SK-N-SH (cell line): ENCODE measurements at regions of chr9 and their contacts with region 1.

Region 1: GRCh38 chr9:130220352-130220751 is 45.2 kb upstream of the HMCN2 start:
- DNase-seq: peak; percentile 89
- H3K4me3 ChIP-seq: no peak overlapping the region
- H3K27ac ChIP-seq: peak overlapping the region in 1 of 2 experiments; percentile 90; a peak in 2 of 4 replicates
- H3K4me1 ChIP-seq: peaks cover 0 to 22% of the 10 kb centered on the region in 2 experiments; a peak in 1 of 4 replicates
- H3K27me3 ChIP-seq: no peaks in the 10 kb centered on the region
- CTCF ChIP-seq: no peak
- EP300 ChIP-seq: no peak
- RAD21 ChIP-seq: peak; percentile 38

Region 2: DNA sequence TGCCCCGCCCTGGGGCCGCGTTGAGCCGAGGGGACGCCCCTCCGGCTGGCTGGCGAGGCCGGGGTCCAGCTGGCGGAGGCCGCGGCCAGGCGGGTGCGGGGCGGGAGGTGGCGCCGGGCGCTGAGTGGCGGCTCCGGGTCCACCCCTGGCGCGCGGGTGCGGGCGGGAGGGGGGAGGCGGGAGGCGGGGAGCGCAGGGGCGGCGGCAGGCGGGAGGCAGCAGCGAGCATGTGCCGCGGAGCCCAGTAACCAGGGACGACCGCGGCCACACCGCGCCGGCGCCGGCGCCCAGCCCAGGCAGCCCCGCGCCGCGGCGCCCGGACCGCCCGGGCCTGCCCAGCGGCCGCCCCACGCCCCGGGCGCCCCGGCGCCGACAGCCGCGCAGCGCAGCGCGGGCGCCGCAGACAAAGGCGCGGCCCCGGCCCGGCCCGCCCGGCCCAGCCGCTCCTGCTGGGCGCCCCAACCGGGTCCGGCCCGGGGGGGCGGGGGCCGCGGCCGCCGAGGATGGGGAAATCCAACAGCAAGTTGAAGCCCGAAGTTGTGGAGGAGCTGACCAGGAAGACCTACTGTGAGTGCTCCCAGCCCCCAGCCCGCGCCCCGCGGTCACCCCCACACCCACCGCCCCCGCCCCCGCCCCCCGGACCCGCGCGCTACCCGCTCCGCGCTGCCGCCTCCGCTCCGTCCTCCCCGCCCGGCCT is 48.0 kb before region 1 on chr9 and contains the start of gene NCS1:
- CTCF ChIA-PET with region 1: interaction called, 10 read pairs
- POLR2A ChIA-PET with region 1: no interaction called
- DNase-seq: peak; percentile 99
- H3K4me3 ChIP-seq: peak within 1 kb of the TSS; percentile 67 to 82
- H3K27ac ChIP-seq: peak within 1 kb of the TSS; percentile 30 to 64; a peak in 3 of 4 replicates
- H3K4me1 ChIP-seq: peaks cover 6 to 20% of the 10 kb centered on the region in 2 experiments; a peak in 1 of 4 replicates
- H3K27me3 ChIP-seq: no peaks in the 10 kb centered on the region
- CTCF ChIP-seq: no peak
- EP300 ChIP-seq: no peak
- RAD21 ChIP-seq: no peak
- polyA plus RNA-seq, gene NCS1: 40.6 and 52.9 TPM in 2 replicates

Region 3: DNA sequence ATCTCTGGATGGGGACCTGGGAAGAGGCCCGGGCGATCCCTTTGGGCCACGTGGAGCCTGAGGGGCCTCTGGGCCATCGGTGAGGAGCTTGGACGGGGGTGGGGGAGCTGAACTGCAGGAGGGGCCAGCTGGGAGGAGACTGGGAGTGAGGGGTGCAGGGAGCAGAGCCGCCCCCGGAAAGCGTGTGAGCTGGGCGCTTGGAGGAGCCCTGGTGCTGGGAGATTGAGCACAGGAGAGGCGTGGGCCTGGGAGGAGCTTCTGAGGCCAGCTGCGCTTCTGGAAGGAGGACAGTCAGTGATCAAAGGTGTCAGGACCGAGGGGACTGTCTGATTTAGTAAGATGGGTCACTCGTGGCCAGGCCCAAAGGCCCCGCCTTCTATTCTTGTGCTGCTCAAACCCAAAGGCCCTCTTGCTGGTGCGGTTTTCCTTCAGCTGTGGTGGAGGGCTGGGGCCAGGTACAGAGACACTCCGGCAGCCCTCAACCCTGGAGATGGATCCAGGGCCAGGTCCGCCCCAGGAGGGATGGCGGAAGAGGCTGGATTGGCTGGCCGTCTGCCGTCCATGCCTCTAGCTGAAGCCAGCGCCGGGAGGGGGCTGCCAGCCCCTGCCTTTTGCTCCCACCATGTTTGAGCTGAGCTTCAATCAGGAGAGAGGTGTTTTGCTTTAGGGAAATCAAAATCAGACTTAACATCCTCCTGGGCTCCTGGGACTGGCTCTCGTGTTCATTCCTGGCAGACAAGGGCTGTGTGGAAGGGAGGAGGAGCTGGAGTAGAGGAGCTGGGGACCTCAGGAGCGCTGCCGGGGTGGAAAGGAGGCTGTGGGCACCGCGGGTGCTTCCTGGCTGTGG is 26.6 kb before region 1 on chr9:
- CTCF ChIA-PET with region 1: interaction called, 14 read pairs
- POLR2A ChIA-PET with region 1: no interaction called
- DNase-seq: peak; percentile 69
- H3K4me3 ChIP-seq: no peak overlapping the region
- H3K27ac ChIP-seq: peak overlapping the region in 1 of 2 experiments; percentile 83; a peak in 2 of 4 replicates
- H3K4me1 ChIP-seq: peaks cover 28 to 84% of the 10 kb centered on the region in 2 experiments
- H3K27me3 ChIP-seq: no peaks in the 10 kb centered on the region
- CTCF ChIP-seq: no peak
- EP300 ChIP-seq: no peak
- RAD21 ChIP-seq: peak; percentile 23; the same call in 1 of the 2 replicates

Region 4: GRCh38 chr9:130254752-130255630 is 34.6 kb after region 1 on chr9:
- CTCF ChIA-PET with region 1: no interaction called
- POLR2A ChIA-PET with region 1: no interaction called
- DNase-seq: no peak
- H3K4me3 ChIP-seq: no peak overlapping the region
- H3K27ac ChIP-seq: no peak overlapping the region
- H3K4me1 ChIP-seq: peaks cover 0 to 6% of the 10 kb centered on the region in 2 experiments; a peak in 1 of 4 replicates
- H3K27me3 ChIP-seq: no peaks in the 10 kb centered on the region; the same call in 1 of the 2 replicates
- CTCF ChIP-seq: no peak
- EP300 ChIP-seq: no peak
- RAD21 ChIP-seq: no peak

Region 5: GRCh38 chr9:130305381-130305780 is 85.0 kb after region 1 on chr9:
- CTCF ChIA-PET with region 1: no interaction called
- POLR2A ChIA-PET with region 1: no interaction called
- DNase-seq: no peak
- H3K4me3 ChIP-seq: no peak overlapping the region
- H3K27ac ChIP-seq: no peak overlapping the region; a peak in 1 of 4 replicates
- H3K4me1 ChIP-seq: peaks cover 0 to 59% of the 10 kb centered on the region in 2 experiments; a peak in 2 of 4 replicates
- H3K27me3 ChIP-seq: no peaks in the 10 kb centered on the region
- CTCF ChIP-seq: no peak
- EP300 ChIP-seq: no peak
- RAD21 ChIP-seq: no peak

Region 6: DNA sequence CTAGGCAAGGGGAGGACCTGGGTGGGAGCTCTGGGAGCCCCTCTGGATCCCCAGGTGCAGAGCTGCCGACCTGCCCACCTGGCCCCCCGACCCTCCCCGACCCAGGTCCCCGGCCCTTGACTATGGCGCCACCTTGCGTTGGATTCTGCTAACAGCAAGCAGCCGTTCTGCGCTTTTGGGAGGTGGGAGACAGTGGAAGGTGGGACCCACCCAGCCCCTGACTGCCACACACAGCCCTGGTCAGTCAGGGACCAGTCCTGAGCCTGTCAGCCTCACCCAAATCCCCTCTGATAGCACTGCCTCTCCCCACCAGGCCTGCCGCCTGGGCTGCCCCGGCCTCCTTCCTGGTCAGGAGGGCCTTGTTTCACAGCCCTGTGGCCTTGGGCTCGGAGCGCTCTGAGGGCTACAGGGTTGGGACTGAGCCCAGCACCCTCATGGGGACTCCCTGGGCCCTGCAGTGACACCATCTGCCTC is 123.1 kb after region 1 on chr9:
- CTCF ChIA-PET with region 1: interaction called, 10 read pairs
- POLR2A ChIA-PET with region 1: no interaction called
- DNase-seq: peak; percentile 88
- H3K4me3 ChIP-seq: peak overlapping the region in 1 of 2 experiments; percentile 35; a peak in 1 of 4 replicates
- H3K27ac ChIP-seq: no peak overlapping the region
- H3K4me1 ChIP-seq: peaks cover 0 to 6% of the 10 kb centered on the region in 2 experiments; a peak in 1 of 4 replicates
- H3K27me3 ChIP-seq: no peaks in the 10 kb centered on the region
- CTCF ChIP-seq: peak; percentile 89
- EP300 ChIP-seq: no peak
- RAD21 ChIP-seq: peak; percentile 83